ENCODE measurements at regions of chr4 and their contacts with region 1.

Region 1: DNA sequence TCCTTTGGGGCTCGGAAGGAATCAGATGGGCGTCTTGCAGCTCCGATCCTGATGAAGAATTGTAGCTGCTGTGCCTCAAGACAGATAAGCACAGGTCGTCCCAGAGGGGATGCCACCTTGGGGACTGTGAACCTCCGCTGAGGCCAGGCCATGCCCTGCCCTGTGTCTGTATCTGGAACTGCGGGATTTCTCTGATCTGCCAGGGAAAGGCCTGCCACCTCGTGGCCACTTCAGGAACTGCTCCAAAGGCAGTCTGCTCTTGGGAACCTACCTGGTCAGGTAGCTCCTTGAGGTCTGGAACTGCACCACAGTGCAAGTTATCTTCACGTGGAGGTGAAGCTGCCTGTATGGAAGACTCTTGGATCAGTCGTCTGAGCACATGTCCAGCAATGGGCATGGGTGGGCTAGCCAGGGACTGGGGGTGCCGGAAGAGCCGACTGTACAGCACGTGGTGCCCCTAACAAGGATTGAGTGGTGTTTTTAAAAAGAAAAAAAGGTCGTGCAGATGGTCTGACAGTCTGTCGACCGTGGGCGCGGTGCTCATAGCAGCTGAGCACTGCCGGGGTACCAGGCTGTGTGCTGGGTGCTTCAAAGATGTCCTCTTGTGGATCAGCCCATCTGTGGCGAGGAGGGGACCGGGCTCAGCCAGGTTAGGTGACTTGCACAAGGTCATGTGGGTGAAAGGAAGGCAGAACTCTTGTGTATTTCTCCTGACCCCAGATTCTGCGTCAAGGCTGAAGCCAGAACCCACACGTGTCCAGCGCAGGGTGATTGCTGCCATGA is 3.1 kb upstream of the GRPEL1 start:
- DNase-seq: peak; percentile 88 to 94 (median 90)
- ATAC-seq: peak; percentile 52
- H3K4me3 ChIP-seq: no peak overlapping the region
- H3K27ac ChIP-seq: peak overlapping the region in 1 of 4 donors; percentile 12
- H3K4me1 ChIP-seq: peaks cover 22% of the 10 kb centered on the region
- H3K27me3 ChIP-seq: no peaks in the 10 kb centered on the region
- CTCF ChIP-seq: peak; percentile 97 to 99 (median 98)
- POLR2A ChIP-seq: no peak

Region 2: GRCh38 chr4:6909073-6909965 is 161.6 kb before region 1 on chr4 and contains the start of gene TBC1D14:
- intact Hi-C with region 1: loop called (anchors 5 kb)
- DNase-seq: peak; percentile 88 to 90 (median 90)
- ATAC-seq: peak; percentile 93
- H3K4me3 ChIP-seq: peak within 1 kb of the TSS; percentile 57 to 67
- H3K27ac ChIP-seq: peak within 1 kb of the TSS; percentile 84 to 100 (median 99)
- H3K4me1 ChIP-seq: peaks cover 31% of the 10 kb centered on the region
- H3K27me3 ChIP-seq: no peaks in the 10 kb centered on the region
- CTCF ChIP-seq: peak in 4 of 7 experiments; percentile 13 to 35 (median 24)
- POLR2A ChIP-seq: peak; percentile 50 to 64 (median 60)
- total RNA-seq, gene TBC1D14: 10.5 to 20.0 TPM

Region 3: DNA sequence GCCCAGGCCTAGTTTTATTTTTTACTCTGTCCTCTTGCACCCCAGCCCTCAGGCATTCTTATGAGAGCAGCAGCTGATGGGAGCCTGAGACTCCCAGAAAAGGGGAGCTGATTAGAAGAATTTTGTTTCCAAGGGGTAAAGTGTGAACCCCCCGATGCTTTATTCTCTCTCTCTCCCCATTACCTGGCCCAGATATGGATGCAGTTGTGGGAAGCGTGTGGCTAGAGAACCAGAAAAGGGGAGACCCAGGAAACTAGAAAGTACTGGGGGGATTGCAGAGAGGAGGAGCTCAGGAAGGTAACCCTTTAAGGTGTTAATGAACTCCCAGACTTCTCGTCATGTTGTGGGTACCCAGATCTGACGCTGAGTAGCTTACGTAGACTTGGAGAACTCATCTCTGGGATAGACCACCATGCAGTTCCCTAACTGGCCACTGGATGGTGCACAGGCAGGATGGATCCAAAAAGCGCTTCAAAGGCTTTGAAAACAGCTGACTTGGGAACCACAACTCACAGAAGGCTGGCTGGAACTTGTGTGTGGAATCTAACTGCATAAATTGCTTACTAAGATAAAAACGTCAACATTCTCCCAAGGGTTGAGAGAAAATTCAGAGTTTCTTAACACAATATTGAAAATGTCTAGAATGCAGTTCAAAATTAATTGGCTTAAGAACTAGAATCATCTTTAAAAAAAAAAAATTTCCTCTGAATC is 96.6 kb before region 1 on chr4:
- intact Hi-C with region 1: loop called (anchors 10 kb)
- DNase-seq: peak; percentile 80 to 85 (median 82)
- ATAC-seq: peak; percentile 94
- H3K4me3 ChIP-seq: no peak overlapping the region
- H3K27ac ChIP-seq: no peak overlapping the region
- H3K4me1 ChIP-seq: peaks cover 8% of the 10 kb centered on the region
- H3K27me3 ChIP-seq: no peaks in the 10 kb centered on the region
- CTCF ChIP-seq: peak; percentile 77 to 95 (median 94)
- POLR2A ChIP-seq: no peak